Posterior cingulate gyrus (tissue), 11 donors: ENCODE measurements at regions of chr7 and their contacts with region 1.

Region 1: GRCh38 chr7:158695726-158696452 is 8.7 kb downstream of the NCAPG2 start:
- DNase-seq: peak in 5 of 10 donors; percentile 38 to 90 (median 45)

Region 2: GRCh38 chr7:158394936-158395335 is 301.0 kb before region 1 on chr7:
- intact Hi-C with region 1: no loop called
- DNase-seq: peak in 4 of 10 donors; percentile 42 to 89 (median 63)

Region 3: DNA sequence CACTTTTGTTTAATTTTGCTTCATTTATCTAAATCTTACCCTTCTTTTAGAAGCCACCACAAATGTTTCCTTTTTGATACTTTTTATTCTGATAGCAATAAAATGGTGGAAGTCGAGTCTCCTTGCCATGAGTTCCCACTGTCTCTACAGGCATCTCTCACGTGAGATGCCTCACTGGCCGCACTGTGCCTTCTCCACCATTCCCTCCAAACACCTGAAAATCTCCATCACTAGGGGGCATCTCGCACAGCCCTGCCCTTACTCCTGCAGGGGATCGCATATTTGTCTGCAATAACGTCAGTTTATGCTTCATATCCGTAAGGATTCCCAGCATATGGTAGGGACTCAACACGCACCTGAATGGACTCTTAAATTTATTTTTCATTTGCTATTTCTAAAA is 65.0 kb after region 1 on chr7:
- intact Hi-C with region 1: no loop called
- DNase-seq: no peak

Region 4: DNA sequence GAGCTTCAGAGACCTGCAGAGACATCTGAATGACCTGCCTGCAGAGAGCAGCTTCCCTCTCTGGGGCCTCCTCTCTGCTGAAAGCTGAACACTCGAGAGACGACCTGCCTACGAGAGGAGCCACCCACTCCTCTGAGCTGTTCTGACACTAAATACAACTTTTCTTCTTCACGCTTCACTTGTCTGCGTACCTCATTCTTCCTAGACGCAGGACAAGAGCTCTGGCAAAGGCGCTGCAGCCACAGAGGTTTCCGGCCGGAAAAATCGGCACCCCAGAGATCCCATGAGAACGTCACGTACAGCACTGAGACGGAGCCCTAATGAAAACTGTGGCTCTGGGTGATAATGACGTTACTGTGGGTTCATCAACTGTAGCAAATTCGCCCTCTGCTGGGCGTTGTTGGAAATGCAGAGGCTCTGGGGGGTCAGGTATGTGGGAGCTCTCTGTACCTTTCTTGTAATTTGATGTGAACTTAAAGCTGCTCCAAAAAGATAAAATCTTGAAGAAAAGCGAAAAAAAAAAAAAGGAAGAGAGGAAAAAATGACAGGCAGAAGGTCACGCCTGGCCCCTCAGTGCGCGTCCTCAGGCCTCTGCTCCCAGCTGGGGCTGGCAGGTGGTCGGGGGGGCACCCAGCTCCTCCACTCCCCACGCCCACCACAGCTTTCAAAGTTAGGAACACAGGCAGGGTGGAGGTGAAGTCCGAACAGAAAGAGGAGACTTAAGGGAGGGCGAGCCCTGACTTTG is 281.1 kb after region 1 on chr7:
- intact Hi-C with region 1: loop called (anchors 1 kb)
- DNase-seq: peak in 9 of 10 donors; percentile 43 to 93 (median 84)